ENCODE measurements at regions of chr18 and their contacts with region 1.

Region 1: DNA sequence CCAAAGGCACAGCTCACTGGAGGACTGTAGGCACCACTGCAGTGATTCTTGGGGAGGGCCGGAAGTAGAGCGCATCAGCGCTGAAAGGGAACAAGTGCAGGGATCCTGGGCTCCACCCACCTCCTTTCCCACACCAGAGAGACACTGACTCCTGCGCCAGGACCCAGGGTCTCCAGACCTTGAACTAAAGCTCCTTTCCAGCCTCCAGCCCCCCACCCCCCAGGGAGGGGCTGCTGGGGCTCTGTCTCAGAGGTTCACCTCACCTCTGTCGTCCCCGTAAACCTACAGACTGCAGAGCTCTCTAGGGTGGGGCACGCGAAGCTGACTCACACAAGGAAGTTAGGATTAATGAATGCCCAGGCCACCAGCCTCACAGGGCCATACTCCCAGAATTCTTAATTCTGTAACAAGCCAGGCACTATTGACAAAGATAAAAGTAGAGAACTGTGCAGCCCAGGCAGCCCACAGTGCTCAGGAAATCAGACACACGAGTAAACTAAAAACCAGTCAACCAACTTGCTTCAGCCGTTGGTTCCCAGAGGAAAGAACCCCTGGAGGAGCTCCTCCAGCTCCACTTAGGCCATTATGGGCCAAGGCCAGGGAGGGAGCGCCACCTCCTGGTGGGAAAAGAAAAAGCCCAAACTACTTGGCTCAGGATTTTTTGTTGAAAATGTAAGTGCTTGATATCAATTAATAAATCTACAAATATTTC is 45.1 kb upstream of the ACAA2 start:
- DNase-seq: peak; percentile 77

Region 2: GRCh38 chr18:49510393-49511115 is 347.9 kb before region 1 on chr18:
- intact Hi-C with region 1: loop called (anchors 1 kb)
- DNase-seq: no peak

Region 3: GRCh38 chr18:49561289-49562193 is 296.9 kb before region 1 on chr18 and contains the start of gene LIPG:
- intact Hi-C with region 1: loop called (anchors 2 kb)
- DNase-seq: no peak
- total RNA-seq, gene LIPG: 1.7 TPM

Region 4: GRCh38 chr18:49757513-49758262 is 100.8 kb before region 1 on chr18:
- intact Hi-C with region 1: no loop called
- DNase-seq: no peak